A673 (cell line): ENCODE measurements at regions of chr5 and their contacts with region 1.

Region 1: DNA sequence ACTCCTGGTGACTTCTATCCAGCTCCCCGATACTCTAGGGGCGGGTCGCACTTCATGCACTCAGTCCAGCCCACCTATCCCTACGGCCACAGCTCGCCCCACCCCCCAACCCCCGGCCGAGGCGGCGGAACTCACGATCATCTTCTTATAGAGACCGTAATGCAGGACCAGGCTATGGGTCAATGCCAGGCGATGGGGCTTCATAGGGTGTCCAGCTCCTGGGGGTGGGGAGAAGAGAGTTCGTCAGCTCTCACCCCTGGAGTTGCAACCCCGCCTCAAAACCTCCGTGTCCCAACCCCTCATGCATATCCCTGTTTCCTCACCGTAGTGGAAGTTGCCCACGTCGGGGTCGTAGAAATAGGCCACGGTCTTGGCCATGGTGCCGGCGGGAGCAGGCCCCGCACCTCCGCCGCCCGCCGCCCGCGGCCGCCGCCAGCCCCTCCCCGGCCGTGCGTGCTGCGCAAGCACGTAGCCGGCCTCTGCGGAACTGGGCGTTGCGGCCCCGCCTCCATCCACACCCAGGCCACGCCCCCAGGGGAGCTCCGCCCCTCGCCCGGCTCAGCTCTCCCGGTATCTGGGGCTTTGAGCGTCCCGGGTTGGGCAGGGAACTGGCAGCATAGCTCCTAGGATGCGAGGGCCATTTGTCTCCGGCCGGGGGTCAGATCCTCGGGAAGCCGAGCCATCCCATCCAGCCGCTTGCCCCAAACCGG is at the starts of genes HDAC3 and RELL2:
- DNase-seq: peak; percentile 94
- H3K4me3 ChIP-seq: peak within 1 kb of the TSS; percentile 95
- H3K27ac ChIP-seq: peak within 1 kb of the TSS; percentile 88
- H3K4me1 ChIP-seq: peaks cover 9% of the 10 kb centered on the region
- H3K27me3 ChIP-seq: no peaks in the 10 kb centered on the region
- CTCF ChIP-seq: no peak
- total RNA-seq, gene HDAC3: 93.1 and 109 TPM in 2 replicates
- total RNA-seq, gene RELL2: 4.7 and 6.6 TPM in 2 replicates

Region 2: GRCh38 chr5:141245250-141245717 is 391.3 kb before region 1 on chr5 and contains the start of gene PCDHB15:
- CTCF ChIA-PET with region 1: no interaction called
- POLR2A ChIA-PET with region 1: no interaction called
- intact Hi-C with region 1: no loop called
- DNase-seq: peak; percentile 51
- H3K4me3 ChIP-seq: no peak within 1 kb of the TSS
- H3K27ac ChIP-seq: no peak within 1 kb of the TSS
- H3K4me1 ChIP-seq: peaks cover 7% of the 10 kb centered on the region
- H3K27me3 ChIP-seq: no peaks in the 10 kb centered on the region
- CTCF ChIP-seq: peak; percentile 51
- total RNA-seq, gene PCDHB15: 1.2 and 2.3 TPM in 2 replicates

Region 3: GRCh38 chr5:141326088-141326854 is 310.3 kb before region 1 on chr5:
- CTCF ChIA-PET with region 1: no interaction called
- POLR2A ChIA-PET with region 1: no interaction called
- intact Hi-C with region 1: no loop called
- DNase-seq: peak; percentile 93
- H3K4me3 ChIP-seq: peak overlapping the region; percentile 47
- H3K27ac ChIP-seq: peak overlapping the region; percentile 76
- H3K4me1 ChIP-seq: no peaks in the 10 kb centered on the region
- H3K27me3 ChIP-seq: no peaks in the 10 kb centered on the region
- CTCF ChIP-seq: peak; percentile 86

Region 4: GRCh38 chr5:141933151-141933550 is 296.6 kb after region 1 on chr5:
- CTCF ChIA-PET with region 1: interaction called, 11 read pairs
- POLR2A ChIA-PET with region 1: no interaction called
- intact Hi-C with region 1: no loop called
- DNase-seq: no peak
- H3K4me3 ChIP-seq: no peak overlapping the region
- H3K27ac ChIP-seq: no peak overlapping the region
- H3K4me1 ChIP-seq: no peaks in the 10 kb centered on the region
- H3K27me3 ChIP-seq: no peaks in the 10 kb centered on the region
- CTCF ChIP-seq: no peak